ENCODE measurements at regions of chr5 and their contacts with region 1.

Region 1: GRCh38 chr5:147509710-147510651 is at the start of gene DPYSL3:
- DNase-seq: peak; percentile 70 to 77
- ATAC-seq: peak; percentile 92 to 96 (median 95)
- H3K4me3 ChIP-seq: peak within 1 kb of the TSS; percentile 50 to 86 (median 74)
- H3K27ac ChIP-seq: peak within 1 kb of the TSS; percentile 7 to 96 (median 87)
- H3K4me1 ChIP-seq: peaks cover 0 to 31% (median 5%) of the 10 kb centered on the region in 9 donors
- H3K27me3 ChIP-seq: peaks cover 0 to 34% (median 13%) of the 10 kb centered on the region in 7 donors
- CTCF ChIP-seq: peak in 6 of 9 donors; percentile 7 to 62 (median 48)
- total RNA-seq, gene DPYSL3: 16.6 to 27.4 (median 21.0) TPM

Region 2: DNA sequence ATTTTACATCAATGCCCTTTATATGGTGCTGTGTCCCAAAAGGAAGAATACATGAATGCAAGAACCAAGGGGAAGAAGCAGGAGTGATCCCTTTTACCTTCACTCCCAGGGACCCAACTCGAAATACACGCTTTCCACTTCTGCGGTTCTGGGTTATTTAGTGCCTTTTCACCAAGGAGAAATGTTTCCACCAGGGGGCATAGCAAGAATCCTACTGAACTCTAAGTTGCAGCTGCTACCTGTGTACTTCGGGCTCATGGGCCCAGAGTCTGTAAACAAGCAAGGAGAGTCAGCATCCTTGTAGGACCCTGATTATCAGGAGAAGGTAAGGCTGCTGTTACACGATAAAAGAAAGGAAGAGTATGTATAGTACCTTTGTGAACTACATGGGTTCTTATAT is 45.8 kb before region 1 on chr5:
- intact Hi-C with region 1: loop called in 4 of 10 experiments (anchors 5 kb)
- DNase-seq: no peak
- ATAC-seq: peak in 2 of 8 donors; percentile 46 to 57
- H3K4me3 ChIP-seq: no peak overlapping the region
- H3K27ac ChIP-seq: no peak overlapping the region
- H3K4me1 ChIP-seq: peaks cover 0 to 49% (median 8%) of the 10 kb centered on the region in 9 donors
- H3K27me3 ChIP-seq: no peaks in the 10 kb centered on the region
- CTCF ChIP-seq: peak in 8 of 9 donors; percentile 35 to 62 (median 45)

Region 3: DNA sequence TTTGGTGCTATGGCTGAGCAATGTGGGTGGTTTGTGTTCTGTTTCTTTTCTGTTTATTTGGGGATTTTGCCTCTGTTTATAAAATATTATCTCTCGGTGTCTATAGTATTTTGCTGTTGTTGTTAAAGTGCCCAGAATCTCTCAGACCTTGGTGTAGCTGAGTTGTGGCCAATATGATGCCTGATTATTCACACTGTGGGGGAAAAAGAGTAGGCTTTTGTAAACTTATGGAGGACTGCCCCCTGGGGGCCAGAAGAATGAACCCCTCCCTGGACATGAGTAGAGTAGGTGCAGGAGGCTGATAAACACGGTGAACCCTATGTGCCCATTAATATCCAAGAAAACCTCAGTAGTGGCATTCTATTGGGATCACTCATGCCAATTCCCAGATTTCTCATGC is 48.8 kb after region 1 on chr5:
- intact Hi-C with region 1: loop called in 5 of 10 experiments (anchors 5 to 10 kb)
- DNase-seq: peak; percentile 35 to 58
- ATAC-seq: peak in 7 of 8 donors; percentile 73 to 88 (median 81)
- H3K4me3 ChIP-seq: no peak overlapping the region
- H3K27ac ChIP-seq: peak overlapping the region in 2 of 10 donors; percentile 26 to 38
- H3K4me1 ChIP-seq: peaks cover 0 to 31% (median 14%) of the 10 kb centered on the region in 9 donors
- H3K27me3 ChIP-seq: no peaks in the 10 kb centered on the region
- CTCF ChIP-seq: peak; percentile 37 to 77 (median 66)

Region 4: GRCh38 chr5:147576646-147577535 is 66.9 kb after region 1 on chr5:
- intact Hi-C with region 1: loop called in 1 of 10 experiments (anchors 5 kb)
- DNase-seq: peak; percentile 56 to 73
- ATAC-seq: peak in 4 of 8 donors; percentile 51 to 74 (median 64)
- H3K4me3 ChIP-seq: no peak overlapping the region
- H3K27ac ChIP-seq: no peak overlapping the region
- H3K4me1 ChIP-seq: peaks cover 0 to 24% (median 4%) of the 10 kb centered on the region in 9 donors
- H3K27me3 ChIP-seq: no peaks in the 10 kb centered on the region
- CTCF ChIP-seq: peak; percentile 74 to 90 (median 86)